Stomach (tissue), 19 donors: ENCODE measurements at regions of chr3 and their contacts with region 1.

Region 1: DNA sequence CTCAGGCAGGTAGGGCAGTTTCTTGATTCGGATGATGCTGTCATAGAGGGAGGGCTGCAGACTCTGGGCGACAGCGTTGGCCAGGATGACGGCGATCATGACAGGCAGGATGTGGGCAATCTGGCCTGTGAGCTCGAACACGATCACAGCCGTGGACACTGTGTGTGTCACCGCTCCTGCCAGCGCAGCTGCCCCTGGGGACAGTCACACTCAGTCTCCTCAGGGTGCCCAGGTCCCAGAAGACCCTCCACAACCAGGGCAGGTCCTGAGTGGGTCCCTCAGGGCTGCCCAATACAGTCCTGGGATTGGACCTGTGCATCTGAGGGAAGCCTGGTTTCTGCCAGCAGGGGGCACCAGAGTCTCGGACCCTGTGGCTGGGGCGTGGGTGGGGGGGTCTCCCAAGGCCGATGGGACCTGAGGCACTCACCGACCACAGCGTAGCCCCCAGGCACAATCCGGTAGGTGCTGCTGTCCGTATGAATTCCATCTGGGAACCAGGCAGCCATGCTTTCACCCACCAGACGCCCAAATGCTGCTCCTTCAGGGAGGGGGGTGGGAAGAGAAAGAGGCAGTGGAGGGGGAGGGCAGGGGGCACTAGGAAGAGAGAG is 7.2 kb downstream of the CLCN2 start:
- DNase-seq: peak; percentile 58 to 75
- H3K4me3 ChIP-seq: no peak overlapping the region
- H3K27ac ChIP-seq: no peak overlapping the region
- H3K4me1 ChIP-seq: peaks cover 5 to 28% (median 18%) of the 10 kb centered on the region in 4 donors
- H3K27me3 ChIP-seq: no peaks in the 10 kb centered on the region
- CTCF ChIP-seq: peak in 5 of 7 experiments; percentile 30 to 79 (median 63)
- EP300 ChIP-seq: no peak
- POLR2A ChIP-seq: no peak

Region 2: DNA sequence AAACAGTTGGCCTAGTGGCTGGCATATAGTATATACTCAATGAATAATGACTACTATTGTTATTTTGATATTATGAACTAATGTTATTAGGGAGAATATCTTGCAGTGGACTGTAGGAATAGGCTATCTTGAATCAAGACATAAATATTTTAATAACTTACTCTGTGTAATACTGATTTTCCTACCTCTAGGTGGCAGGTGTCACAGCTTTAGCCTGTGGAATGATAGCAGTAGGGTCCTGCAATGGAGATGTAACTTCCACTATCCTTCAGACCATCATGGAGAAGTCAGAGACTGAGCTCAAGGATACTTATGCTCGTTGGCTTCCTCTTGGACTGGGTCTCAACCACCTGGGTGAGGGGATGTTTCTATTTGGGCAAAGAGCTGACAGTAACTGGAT is 48.6 kb before region 1 on chr3:
- intact Hi-C with region 1: loop called (anchors 10 kb)
- DNase-seq: peak in 1 of 2 donors; percentile 37
- H3K4me3 ChIP-seq: no peak overlapping the region
- H3K27ac ChIP-seq: no peak overlapping the region
- H3K4me1 ChIP-seq: peaks cover 2 to 15% (median 6%) of the 10 kb centered on the region in 4 donors
- H3K27me3 ChIP-seq: no peaks in the 10 kb centered on the region
- CTCF ChIP-seq: peak in 2 of 7 experiments; percentile 12 to 14
- EP300 ChIP-seq: no peak
- POLR2A ChIP-seq: no peak